ENCODE measurements at regions of chr20 and their contacts with region 1.

Region 1: DNA sequence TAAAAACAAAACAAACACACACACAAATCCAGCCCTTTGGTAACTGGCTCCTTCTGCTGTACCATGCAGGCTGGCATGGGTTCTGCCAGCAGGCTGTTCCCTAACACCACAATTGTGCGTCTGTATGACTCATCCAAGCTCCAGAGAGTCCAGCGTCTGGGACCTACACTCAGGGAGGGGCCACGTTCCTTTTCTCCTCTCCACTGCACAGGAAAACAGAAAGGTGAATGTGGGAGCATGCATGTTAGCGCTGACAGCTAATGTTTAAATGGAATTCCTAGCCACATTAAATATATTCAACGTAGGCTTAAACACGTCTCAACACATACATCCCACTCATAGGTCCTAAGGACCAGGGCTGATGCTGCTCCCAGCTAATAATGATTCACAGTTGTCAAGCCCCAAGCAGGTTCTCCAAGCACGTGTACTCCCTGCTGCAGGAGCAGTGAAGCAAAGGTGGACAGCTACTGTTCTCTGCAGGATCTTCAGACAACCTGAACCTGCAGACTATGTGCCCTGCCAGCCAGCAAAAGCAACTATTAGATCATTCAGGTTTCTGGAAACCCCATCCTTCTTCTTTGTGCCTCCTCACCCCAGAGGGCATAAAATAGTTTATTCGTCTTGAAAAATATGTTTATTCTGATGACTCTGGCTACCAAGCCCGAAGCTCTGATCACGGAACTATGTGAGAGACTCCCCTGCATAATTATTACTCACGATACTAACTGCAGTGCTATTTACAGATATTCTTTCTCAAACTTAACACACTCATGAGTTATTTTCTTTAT is 20.9 kb downstream of the MAP1LC3A start:
- DNase-seq: no peak
- H3K4me3 ChIP-seq: no peak overlapping the region
- CTCF ChIP-seq: peak; percentile 73

Region 2: GRCh38 chr20:34350095-34350494 is 229.3 kb before region 1 on chr20:
- CTCF ChIA-PET with region 1: no interaction called
- POLR2A ChIA-PET with region 1: no interaction called
- DNase-seq: no peak
- H3K4me3 ChIP-seq: no peak overlapping the region
- CTCF ChIP-seq: no peak

Region 3: GRCh38 chr20:34704177-34705007 is 125.0 kb after region 1 on chr20 and contains the start of gene TP53INP2:
- CTCF ChIA-PET with region 1: interaction called, 21 read pairs
- POLR2A ChIA-PET with region 1: no interaction called
- DNase-seq: peak; percentile 45
- H3K4me3 ChIP-seq: peak within 1 kb of the TSS; percentile 81
- CTCF ChIP-seq: no peak

Region 4: GRCh38 chr20:34713194-34713943 is 134.0 kb after region 1 on chr20:
- CTCF ChIA-PET with region 1: interaction called, 21 read pairs
- POLR2A ChIA-PET with region 1: interaction called, 3 read pairs
- DNase-seq: peak; percentile 99
- H3K4me3 ChIP-seq: no peak overlapping the region
- CTCF ChIP-seq: no peak

Measured in AG04449 (cell line).